Head of caudate nucleus (tissue), 42 donors: ENCODE measurements at regions of chr1 and their contacts with region 1.

Region 1: DNA sequence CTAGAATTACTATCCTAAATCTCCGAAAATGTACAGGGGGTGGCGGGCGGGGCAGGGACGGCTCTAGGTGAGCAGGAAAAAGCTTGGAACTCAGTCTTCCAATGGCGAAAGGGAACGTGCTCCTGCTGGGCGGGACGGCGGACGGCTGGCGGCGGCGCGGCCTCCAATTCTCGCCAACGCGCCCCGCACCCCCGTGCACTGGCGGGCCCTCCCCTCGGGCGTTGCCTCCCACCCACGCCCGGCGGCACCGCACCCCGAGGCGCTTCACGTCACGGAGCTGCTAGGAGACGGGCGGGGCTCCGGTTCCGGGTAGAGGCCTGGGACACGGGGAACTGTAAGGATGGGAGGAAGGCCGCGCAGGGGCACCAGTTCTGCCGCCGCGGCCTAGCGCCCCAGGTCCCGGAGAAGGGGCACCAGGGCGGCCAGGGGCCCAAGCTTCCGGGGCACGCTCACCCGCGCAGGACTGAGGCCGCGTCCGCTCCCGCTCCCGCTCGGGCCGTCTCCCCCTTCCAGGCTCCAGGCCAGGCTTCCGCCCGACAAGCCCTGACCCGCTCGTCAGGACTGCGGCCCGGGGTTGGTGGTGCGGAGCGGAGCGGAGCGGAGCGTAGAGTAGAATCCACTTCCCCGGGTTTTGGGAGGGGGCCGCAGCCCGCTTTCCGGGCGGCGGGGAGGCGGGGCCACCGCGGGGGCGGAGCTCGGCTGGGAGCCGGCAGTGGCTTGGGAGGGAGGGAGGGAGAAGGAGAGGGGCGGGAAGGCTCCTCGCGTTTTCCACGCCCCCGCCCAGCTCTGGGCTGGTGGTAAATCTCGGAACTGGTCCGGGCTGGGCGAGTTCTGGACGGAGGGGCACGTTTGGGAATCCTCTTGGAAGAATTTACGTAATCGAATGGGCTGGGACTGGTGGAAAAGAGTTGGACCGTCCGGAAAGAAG is at the start of gene DDX59:
- DNase-seq: peak; percentile 82 to 98 (median 95)

Region 2: GRCh38 chr1:200118779-200119505 is 550.6 kb before region 1 on chr1:
- intact Hi-C with region 1: no loop called
- DNase-seq: no peak

Region 3: DNA sequence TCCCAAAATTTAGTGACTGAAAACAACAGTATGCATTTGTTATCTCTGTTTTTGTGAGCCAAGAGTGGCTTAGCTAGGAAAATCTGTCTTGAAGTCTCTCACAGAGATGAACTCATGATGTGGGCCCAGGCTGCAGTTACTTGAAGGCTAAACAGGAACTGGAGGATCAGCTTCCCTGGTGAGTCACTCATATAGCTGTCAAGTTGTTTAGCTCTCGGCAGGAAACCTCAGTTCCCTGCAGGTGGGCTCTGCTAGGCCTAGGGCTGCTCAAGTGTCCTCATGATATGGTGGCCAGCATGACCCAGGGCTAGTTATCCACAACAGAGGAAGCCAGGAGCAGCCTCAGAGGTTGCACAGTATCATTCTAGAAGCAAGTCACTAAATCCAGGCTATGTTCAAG is 30.3 kb after region 1 on chr1:
- intact Hi-C with region 1: no loop called
- DNase-seq: no peak

Region 4: GRCh38 chr1:200738740-200739498 is 69.3 kb after region 1 on chr1 and contains the start of gene CAMSAP2:
- intact Hi-C with region 1: loop called (anchors 2 kb)
- DNase-seq: peak; percentile 72 to 95 (median 90)

Region 5: GRCh38 chr1:200811704-200812103 is 142.1 kb after region 1 on chr1:
- intact Hi-C with region 1: no loop called
- DNase-seq: no peak